ENCODE measurements at regions of chr10 and their contacts with region 1.

Region 1: DNA sequence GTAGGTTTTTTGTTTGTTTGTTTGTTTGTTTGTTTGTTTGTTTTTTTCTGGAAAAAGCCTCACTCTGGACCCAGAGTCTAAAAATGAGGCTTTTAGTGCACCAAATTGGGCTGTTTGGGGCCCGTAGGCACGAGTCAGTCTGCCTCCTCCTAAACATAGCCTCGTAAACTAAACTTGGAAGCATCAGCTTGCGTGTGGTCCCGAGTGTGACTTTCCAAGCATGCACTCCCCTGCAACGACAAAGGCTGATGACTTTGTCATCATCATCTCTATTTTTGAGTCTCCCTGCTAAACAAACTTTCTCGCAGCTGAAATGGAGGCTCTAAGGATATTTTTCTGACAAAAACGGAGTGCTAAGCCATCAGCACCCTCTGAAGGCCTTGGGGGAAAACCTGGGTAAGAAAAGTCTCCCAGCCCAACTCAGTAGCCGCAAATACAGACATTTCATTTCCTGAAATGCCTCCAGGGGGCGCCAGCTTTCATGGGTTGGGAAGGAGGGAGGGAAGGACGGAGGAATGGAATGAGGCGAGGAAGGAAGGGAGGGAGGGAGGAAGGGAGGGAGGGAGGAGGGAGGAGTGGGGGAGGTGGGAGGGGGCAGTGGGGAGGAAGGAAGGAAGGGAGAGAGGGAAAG is 245.9 kb downstream of the KCNMA1 start:
- DNase-seq: peak; percentile 100
- ATAC-seq: peak; percentile 25
- H3K4me3 ChIP-seq: peak overlapping the region; percentile 10; the same call in 1 of the 2 replicates
- H3K27ac ChIP-seq: peak overlapping the region; percentile 84
- H3K4me1 ChIP-seq: peaks cover 89% of the 10 kb centered on the region
- H3K27me3 ChIP-seq: no peaks in the 10 kb centered on the region
- CTCF ChIP-seq: peak; percentile 97

Region 2: DNA sequence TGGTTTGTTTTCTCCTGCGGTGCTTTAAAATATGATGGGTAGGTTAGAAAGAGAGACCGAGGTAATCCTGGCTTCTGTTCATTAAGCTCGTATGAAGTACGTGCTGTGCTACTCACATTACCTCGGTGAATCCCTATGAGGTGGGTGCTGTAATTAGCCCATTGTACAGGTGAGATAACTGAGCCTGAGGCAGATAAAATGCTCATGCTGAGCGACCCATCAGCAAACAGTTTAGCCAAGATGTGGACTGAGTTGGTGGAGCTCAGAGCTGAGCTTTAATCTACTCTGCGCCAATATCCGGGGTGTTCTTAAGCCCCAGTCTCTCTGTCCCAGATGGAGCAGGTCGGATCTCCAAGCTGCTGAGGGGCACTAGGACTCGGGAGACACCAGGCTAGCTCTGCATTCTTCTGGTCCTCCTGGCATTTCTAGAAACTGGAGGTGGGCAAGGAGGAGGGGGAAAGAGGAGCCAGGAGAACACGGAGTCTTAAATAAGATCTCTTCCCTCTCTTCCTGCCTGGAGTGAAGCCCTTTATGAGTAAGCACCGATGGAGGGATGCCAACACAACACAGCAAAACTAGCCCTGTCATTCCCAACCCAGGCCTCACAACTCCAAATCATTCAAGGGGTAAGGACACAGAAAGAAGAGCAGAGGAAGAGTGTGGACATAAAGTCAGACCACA is 212.6 kb before region 1 on chr10:
- CTCF ChIA-PET with region 1: interaction called, 30 read pairs
- POLR2A ChIA-PET with region 1: interaction called, 3 read pairs
- intact Hi-C with region 1: loop called (anchors 1 kb)
- DNase-seq: peak; percentile 100
- ATAC-seq: peak; percentile 94
- H3K4me3 ChIP-seq: no peak overlapping the region
- H3K27ac ChIP-seq: peak overlapping the region; percentile 48
- H3K4me1 ChIP-seq: peaks cover 36% of the 10 kb centered on the region
- H3K27me3 ChIP-seq: no peaks in the 10 kb centered on the region
- CTCF ChIP-seq: no peak

Region 3: DNA sequence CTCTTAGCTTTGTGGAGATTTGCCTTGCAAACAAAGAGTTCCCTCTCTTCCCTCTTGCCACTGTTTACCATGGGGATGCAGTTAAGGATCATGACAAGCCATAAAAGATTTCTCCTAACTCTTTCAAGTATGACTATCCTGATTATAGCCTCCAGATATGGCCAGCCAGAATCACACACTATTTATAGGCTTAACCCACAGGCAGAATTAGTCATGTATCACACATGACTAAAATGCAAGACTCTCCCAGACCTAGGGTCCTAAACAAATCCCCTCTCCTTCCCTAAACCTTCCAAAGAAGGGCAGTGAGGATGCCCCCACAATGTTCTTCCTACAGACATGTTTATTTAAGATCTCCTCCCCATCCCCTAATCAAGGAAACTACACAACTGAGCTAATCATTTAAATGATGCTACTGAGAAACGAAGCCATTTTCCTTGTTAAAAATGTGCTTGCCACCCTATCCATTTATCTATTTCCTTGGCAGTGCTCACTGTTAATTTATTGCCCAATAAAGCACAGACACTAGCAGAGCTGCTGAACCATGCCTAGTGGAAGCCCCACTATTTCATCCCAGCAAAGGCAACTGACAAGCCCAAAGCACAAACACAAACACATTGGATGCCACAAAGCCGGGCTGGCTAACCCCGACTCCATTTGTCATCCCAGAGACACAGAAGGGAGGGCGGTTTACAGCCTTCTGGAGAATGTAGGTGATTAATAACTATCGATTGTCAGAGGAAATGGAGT is 117.5 kb before region 1 on chr10:
- CTCF ChIA-PET with region 1: interaction called, 11 read pairs
- POLR2A ChIA-PET with region 1: no interaction called
- intact Hi-C with region 1: loop called (anchors 1 kb)
- DNase-seq: peak; percentile 100
- ATAC-seq: peak; percentile 96
- H3K4me3 ChIP-seq: no peak overlapping the region; the same call in 1 of the 2 replicates
- H3K27ac ChIP-seq: peak overlapping the region; percentile 74
- H3K4me1 ChIP-seq: peaks cover 28% of the 10 kb centered on the region
- H3K27me3 ChIP-seq: no peaks in the 10 kb centered on the region
- CTCF ChIP-seq: no peak

Region 4: GRCh38 chr10:77416311-77417135 is 24.8 kb after region 1 on chr10:
- CTCF ChIA-PET with region 1: interaction called, 4 read pairs
- POLR2A ChIA-PET with region 1: interaction called, 5 read pairs
- intact Hi-C with region 1: loop called (anchors 1 kb)
- DNase-seq: peak; percentile 100
- ATAC-seq: peak; percentile 94
- H3K4me3 ChIP-seq: peak overlapping the region; percentile 3; the same call in 1 of the 2 replicates
- H3K27ac ChIP-seq: peak overlapping the region; percentile 76
- H3K4me1 ChIP-seq: peaks cover 37% of the 10 kb centered on the region
- H3K27me3 ChIP-seq: no peaks in the 10 kb centered on the region
- CTCF ChIP-seq: no peak

Region 5: DNA sequence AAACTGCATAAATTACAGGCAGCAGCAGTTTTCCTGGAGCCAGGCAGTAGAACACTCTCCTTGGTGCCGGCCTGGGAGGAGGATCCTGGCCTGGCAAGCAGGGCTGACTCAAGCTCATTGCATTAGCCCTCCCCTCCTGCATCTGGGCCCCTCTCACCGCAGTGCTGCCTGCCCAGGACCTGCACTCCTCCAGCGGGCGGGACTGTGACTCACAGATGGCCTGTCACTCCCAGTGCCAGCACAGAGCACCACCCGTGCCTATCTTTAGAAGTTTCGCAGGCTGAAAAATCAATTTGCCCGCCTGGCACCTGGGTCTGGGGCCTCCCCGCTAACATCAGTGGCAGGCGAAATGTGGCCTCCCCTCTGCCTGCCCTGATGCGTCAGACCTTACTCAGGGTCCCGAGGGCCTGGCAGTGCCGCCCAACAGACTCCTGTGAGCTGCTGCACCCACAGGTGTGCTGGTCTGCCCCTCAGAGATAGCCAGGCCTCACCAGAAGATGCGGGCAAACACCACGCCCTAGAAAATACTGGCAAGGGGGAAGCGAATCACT is 122.1 kb after region 1 on chr10:
- CTCF ChIA-PET with region 1: interaction called, 15 read pairs
- POLR2A ChIA-PET with region 1: interaction called, 6 read pairs
- intact Hi-C with region 1: loop called (anchors 1 kb)
- DNase-seq: peak; percentile 100
- ATAC-seq: peak; percentile 91
- H3K4me3 ChIP-seq: peak overlapping the region; percentile 49
- H3K27ac ChIP-seq: peak overlapping the region; percentile 82
- H3K4me1 ChIP-seq: peaks cover 69% of the 10 kb centered on the region
- H3K27me3 ChIP-seq: no peaks in the 10 kb centered on the region
- CTCF ChIP-seq: no peak

Region 6: GRCh38 chr10:77641788-77642397 is 250.2 kb after region 1 on chr10:
- CTCF ChIA-PET with region 1: interaction called, 28 read pairs
- POLR2A ChIA-PET with region 1: interaction called, 3 read pairs
- intact Hi-C with region 1: loop called (anchors 1 kb)
- DNase-seq: peak; percentile 100
- ATAC-seq: peak; percentile 13
- H3K4me3 ChIP-seq: no peak overlapping the region
- H3K27ac ChIP-seq: peak overlapping the region; percentile 2
- H3K4me1 ChIP-seq: peaks cover 35% of the 10 kb centered on the region
- H3K27me3 ChIP-seq: no peaks in the 10 kb centered on the region
- CTCF ChIP-seq: peak; percentile 100

Measured in PC-3 (cell line).